CD4-positive, alpha-beta T cell (primary cell): ENCODE measurements at regions of chr20 and their contacts with region 1.

Region 1: DNA sequence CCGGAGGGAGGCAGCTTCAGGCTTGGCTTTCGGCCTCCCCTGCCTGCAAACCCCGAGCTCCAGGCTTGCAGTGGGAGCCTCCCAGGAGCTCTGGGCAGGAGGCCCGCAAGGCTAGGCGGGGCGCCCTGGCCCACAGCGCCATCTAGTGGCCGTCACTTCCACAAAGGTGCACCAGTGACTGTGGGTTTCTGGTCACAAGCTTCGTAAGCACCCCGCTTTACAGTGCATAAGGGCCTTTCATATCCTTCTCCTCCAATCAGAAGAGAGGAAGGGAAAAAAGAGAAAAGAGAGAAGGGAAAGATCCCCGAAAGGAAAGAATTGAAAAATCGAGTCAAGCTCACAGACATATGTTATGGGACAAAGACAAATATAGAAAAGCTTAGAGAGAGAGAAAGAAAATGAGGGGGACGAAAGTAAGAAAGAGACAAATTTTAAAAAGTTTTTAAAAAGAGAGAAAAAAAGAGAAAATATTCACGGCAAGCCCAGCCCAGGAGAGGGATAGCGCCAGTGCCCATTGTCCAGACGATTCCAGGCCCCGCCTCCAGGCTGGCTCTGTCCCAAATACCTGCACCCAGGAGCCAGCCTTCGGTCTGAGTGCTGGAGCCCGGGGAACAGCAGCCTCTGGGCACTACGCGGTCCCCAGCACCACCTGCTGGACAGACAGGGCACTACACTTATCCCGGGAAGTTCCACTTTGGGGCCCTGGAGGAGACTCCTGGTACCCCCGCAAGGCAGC is 207.1 kb downstream of the PREX1 start:
- DNase-seq: peak; percentile 51 to 81 (median 61)
- ATAC-seq: peak; percentile 88
- H3K4me3 ChIP-seq: peak overlapping the region; percentile 10
- H3K4me3 Mint-ChIP-seq: peak overlapping the region; percentile 71
- H3K27ac ChIP-seq: no peak overlapping the region
- H3K27ac Mint-ChIP-seq: peak overlapping the region; percentile 4
- H3K4me1 ChIP-seq: peaks cover 19% of the 10 kb centered on the region
- H3K4me1 Mint-ChIP-seq: peaks cover 8% of the 10 kb centered on the region
- H3K27me3 ChIP-seq: no peaks in the 10 kb centered on the region
- H3K27me3 Mint-ChIP-seq: no peaks in the 10 kb centered on the region
- CTCF ChIP-seq: peak; percentile 95

Region 2: GRCh38 chr20:47196091-47197081 is 1424.3 kb before region 1 on chr20:
- CTCF ChIA-PET with region 1: interaction called, 5 read pairs
- POLR2A ChIA-PET with region 1: no interaction called
- intact Hi-C with region 1: loop called in 1 of 2 experiments (anchors 5 kb)
- DNase-seq: peak; percentile 44 to 81 (median 66)
- ATAC-seq: peak; percentile 74
- H3K4me3 ChIP-seq: no peak overlapping the region
- H3K4me3 Mint-ChIP-seq: no peak overlapping the region
- H3K27ac ChIP-seq: no peak overlapping the region
- H3K27ac Mint-ChIP-seq: no peak overlapping the region
- H3K4me1 ChIP-seq: peaks cover 5% of the 10 kb centered on the region
- H3K4me1 Mint-ChIP-seq: no peaks in the 10 kb centered on the region
- H3K27me3 ChIP-seq: no peaks in the 10 kb centered on the region
- H3K27me3 Mint-ChIP-seq: peaks cover 3% of the 10 kb centered on the region
- CTCF ChIP-seq: peak; percentile 98

Region 3: DNA sequence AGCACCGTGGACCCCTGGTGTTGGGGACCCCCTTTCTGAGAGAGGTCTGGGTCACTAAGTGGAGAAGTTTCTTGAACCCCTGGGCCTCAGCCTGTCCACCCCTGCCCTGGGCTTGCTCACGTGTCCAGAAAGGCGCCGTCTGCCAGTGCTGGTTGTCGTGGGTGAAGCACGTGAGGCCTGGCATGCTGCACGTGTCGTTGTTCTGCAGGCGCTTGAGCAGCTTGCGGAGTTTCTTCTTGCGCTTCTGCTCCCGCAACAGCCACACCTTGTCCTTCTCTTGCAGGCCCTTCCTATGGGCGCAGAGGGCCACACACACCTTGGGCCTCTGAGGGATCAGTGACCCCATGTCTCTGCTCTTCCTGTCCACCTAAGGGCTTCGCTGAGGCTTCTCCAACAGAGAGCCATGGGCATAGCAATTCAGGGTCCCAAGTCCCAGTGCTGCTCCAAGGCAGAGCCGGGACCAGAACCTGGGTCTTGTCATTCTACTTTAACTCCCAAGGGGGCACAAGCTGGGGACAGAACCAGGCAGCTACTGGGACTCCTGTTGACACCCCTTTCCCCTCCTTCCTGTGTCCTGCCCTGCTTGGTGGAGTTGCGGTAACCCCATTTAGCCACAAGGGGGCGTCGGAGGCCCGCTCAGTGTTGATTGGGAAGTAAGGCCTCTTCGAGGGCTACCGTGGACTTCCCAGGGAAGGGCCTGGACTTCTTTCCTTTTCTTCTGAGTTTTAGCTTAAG is 957.2 kb before region 1 on chr20:
- CTCF ChIA-PET with region 1: interaction called, 15 read pairs
- POLR2A ChIA-PET with region 1: no interaction called
- intact Hi-C with region 1: loop called (anchors 1 kb)
- DNase-seq: peak; percentile 54 to 82 (median 68)
- ATAC-seq: peak; percentile 82
- H3K4me3 ChIP-seq: no peak overlapping the region
- H3K4me3 Mint-ChIP-seq: no peak overlapping the region
- H3K27ac ChIP-seq: no peak overlapping the region
- H3K27ac Mint-ChIP-seq: peak overlapping the region; percentile 32
- H3K4me1 ChIP-seq: peaks cover 8% of the 10 kb centered on the region
- H3K4me1 Mint-ChIP-seq: no peaks in the 10 kb centered on the region
- H3K27me3 ChIP-seq: no peaks in the 10 kb centered on the region
- H3K27me3 Mint-ChIP-seq: no peaks in the 10 kb centered on the region
- CTCF ChIP-seq: peak; percentile 92

Region 4: DNA sequence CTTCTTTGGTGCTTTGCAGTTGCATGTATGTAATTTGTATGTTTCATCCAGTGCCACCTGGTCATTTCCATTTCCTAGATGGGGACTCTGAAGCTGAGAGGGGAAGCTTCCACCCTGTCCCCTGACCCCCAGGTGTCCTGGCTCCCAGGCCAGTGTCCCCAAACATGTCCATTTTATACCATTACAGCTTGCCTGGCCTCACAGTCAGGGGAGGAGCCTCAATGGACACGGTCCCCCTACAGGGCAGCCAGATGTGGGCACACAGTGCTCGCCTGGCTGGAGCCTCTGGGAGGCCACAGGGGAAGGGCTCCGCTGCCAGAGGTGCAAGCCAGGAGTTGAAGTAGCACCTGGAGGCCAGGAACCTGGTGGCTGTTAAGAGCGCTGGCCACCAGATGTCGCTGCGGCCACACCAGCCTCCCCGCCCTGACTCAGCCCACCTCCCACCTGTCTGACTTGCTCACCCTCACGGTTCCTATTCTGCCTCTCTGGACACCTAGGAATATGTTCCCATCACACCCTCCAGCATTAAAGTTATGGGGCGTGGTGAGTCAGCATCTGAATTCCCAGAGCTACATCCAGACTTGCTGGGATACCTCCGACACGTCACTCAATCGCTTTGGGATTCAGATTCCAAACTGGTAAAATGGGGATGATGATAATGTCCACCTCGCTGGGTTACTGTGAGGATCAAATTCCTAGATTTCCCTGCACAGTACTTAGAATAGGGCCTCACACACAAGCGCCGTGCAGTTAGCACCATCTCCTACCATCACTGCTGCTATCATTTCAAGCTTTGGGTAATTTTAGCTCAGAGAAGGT is 942.8 kb before region 1 on chr20:
- CTCF ChIA-PET with region 1: interaction called, 22 read pairs
- POLR2A ChIA-PET with region 1: interaction called, 3 read pairs
- intact Hi-C with region 1: loop called (anchors 1 kb)
- DNase-seq: peak in 13 of 14 experiments; percentile 36 to 73 (median 47)
- ATAC-seq: peak; percentile 65
- H3K4me3 ChIP-seq: no peak overlapping the region
- H3K4me3 Mint-ChIP-seq: no peak overlapping the region
- H3K27ac ChIP-seq: no peak overlapping the region
- H3K27ac Mint-ChIP-seq: no peak overlapping the region
- H3K4me1 ChIP-seq: peaks cover 6% of the 10 kb centered on the region
- H3K4me1 Mint-ChIP-seq: peaks cover 6% of the 10 kb centered on the region
- H3K27me3 ChIP-seq: no peaks in the 10 kb centered on the region
- H3K27me3 Mint-ChIP-seq: no peaks in the 10 kb centered on the region
- CTCF ChIP-seq: peak; percentile 72

Region 5: DNA sequence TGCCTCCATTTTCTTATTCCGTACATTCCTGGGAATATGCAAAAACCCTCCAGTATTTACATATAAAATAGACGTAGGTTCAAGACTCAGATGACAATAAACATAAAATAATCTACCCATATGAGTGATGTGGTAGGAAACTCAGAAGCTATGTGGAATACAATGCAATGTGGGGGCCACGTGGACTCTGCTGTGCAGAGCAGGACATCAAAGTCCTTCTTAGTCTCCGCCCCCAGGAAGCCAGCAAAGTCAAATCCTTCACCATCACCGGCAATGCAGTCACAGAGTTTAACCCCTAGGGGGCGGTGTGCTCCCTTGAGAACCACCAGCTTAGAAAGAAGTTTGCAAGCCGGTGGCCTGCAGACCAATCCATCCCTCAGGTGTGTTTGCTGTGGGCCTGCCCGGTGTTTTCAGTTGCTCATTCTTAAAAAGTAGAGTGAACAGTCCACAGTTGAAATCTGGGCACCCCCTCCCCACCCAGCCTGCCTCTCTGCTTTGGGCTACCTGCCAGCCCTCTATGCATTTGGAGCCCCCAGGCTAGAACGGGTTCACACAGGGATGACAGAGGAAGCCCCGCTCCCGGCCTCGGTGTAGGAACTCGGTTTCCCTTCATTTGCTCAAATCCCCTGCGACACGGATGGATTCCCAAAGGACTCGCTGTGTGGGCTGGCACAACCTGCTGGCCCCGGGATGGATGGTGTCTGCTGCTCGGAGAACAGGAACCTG is 895.3 kb before region 1 on chr20:
- CTCF ChIA-PET with region 1: interaction called, 19 read pairs
- POLR2A ChIA-PET with region 1: no interaction called
- intact Hi-C with region 1: loop called (anchors 1 kb)
- DNase-seq: peak; percentile 65 to 92 (median 72)
- ATAC-seq: peak; percentile 75
- H3K4me3 ChIP-seq: no peak overlapping the region
- H3K4me3 Mint-ChIP-seq: no peak overlapping the region
- H3K27ac ChIP-seq: no peak overlapping the region
- H3K27ac Mint-ChIP-seq: peak overlapping the region; percentile 75
- H3K4me1 ChIP-seq: peaks cover 45% of the 10 kb centered on the region
- H3K4me1 Mint-ChIP-seq: peaks cover 44% of the 10 kb centered on the region
- H3K27me3 ChIP-seq: no peaks in the 10 kb centered on the region
- H3K27me3 Mint-ChIP-seq: no peaks in the 10 kb centered on the region
- CTCF ChIP-seq: peak; percentile 89

Region 6: GRCh38 chr20:48597405-48598302 is 23.0 kb before region 1 on chr20:
- CTCF ChIA-PET with region 1: no interaction called
- POLR2A ChIA-PET with region 1: no interaction called
- intact Hi-C with region 1: no loop called
- DNase-seq: no peak
- ATAC-seq: no peak
- H3K4me3 ChIP-seq: no peak overlapping the region
- H3K4me3 Mint-ChIP-seq: no peak overlapping the region
- H3K27ac ChIP-seq: no peak overlapping the region
- H3K27ac Mint-ChIP-seq: no peak overlapping the region
- H3K4me1 ChIP-seq: no peaks in the 10 kb centered on the region
- H3K4me1 Mint-ChIP-seq: no peaks in the 10 kb centered on the region
- H3K27me3 ChIP-seq: no peaks in the 10 kb centered on the region
- H3K27me3 Mint-ChIP-seq: peaks cover 15% of the 10 kb centered on the region
- CTCF ChIP-seq: no peak